ENCODE measurements at regions of chr13 and their contacts with region 1.

Region 1: DNA sequence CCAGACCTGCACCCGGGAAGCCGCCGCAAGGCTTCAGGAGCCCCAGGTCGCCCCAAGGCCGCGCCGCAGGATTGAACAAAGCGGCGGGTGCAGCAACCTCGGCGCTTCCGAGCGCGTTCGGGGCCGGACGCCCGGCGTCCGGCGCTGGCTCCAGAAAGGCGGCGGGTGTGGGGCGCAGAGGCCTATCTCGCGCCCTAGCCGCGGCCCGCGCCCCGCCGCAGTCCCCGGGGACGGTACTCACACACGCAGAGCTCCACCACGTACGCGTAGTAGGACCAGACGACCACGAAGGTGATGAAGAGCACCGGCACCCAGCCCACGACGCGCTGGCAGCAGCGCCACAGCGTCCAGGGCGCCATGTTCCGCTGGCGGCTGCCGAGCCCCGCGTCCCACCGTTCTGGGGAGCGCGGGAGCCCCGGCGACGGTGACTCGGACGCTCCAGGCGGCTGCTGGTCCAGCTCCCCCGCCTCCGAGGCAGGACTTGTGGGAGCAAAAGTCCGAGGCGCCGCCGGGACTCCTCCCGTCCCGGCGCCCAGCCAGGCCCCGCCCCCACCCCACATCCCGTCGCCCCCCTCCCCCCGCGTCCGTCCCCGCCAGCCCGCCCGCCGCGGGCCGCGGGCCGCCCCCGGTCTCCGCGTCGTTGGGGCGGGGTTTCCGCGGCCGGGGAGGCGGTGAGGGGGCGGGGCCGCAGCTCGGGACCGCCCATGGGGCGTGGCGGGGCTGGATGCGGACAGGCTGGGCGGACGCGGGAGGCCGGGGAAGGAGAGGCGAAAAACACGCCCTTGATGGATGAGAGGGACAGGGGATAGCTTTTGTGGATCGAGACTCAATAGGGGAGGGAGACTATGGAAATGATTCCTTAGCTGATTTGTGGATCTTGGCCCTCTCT is at the start of gene ZDHHC20:
- DNase-seq: peak; percentile 83
- ATAC-seq: peak; percentile 83
- H3K4me3 ChIP-seq: peak within 1 kb of the TSS; percentile 99
- H3K27ac ChIP-seq: peak within 1 kb of the TSS; percentile 52
- H3K4me1 ChIP-seq: peaks cover 11% of the 10 kb centered on the region; the same call in 1 of the 2 replicates
- H3K27me3 ChIP-seq: no peaks in the 10 kb centered on the region
- CTCF ChIP-seq: no peak
- total RNA-seq, gene ZDHHC20: 46.4 and 53.7 TPM in 2 replicates

Region 2: DNA sequence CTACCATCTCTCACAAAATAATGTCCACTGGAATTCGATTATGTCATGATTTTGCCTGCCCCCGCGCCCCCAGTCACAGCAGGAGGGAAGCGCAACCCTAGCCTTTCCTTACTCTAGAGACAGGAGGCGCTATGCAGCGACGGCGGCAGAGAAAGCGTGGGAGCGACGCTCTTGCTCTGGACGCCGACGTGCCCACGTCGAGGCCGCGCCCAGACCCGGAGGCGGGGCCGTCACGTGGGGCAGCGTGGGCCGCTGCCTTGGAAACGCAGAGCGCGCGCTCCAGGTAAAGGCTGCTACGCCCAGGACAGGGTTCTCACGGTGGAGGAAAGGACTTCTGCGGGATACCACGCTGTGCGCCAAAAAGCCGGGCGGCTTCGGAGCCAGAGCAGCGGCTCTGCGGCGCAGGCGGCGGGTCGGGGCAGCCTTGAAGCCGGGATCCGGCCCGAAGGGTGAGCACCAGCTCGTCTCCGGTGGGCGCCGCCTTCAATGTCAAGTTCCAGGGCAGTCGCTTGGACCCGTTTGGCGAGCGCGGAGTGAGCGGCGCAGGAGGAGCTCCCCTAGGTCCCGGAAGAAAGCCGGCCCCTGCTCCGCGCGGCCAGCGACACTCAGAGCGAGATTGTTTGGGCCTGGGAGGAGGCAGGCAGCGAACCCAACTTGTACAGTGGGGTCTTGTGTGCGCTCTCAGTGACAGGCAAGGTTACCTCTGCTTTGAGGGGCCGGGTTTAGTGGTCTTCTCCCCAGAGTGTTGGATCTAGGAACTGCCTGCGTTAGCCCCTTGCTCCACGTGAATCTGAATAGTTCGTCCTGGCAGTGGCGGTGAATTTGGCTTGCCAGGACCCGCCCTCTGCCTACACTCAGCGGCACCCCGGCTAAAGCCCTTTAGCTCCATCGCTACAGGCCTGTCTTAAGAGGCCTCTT is 160.9 kb before region 1 on chr13:
- CTCF ChIA-PET with region 1: no interaction called
- POLR2A ChIA-PET with region 1: interaction called, 10 read pairs
- intact Hi-C with region 1: loop called (anchors 5 kb)
- DNase-seq: peak; percentile 87
- ATAC-seq: peak; percentile 88
- H3K4me3 ChIP-seq: peak overlapping the region; percentile 86
- H3K27ac ChIP-seq: peak overlapping the region; percentile 44
- H3K4me1 ChIP-seq: peaks cover 14% of the 10 kb centered on the region
- H3K27me3 ChIP-seq: no peaks in the 10 kb centered on the region
- CTCF ChIP-seq: peak; percentile 64

Region 3: GRCh38 chr13:21402586-21403228 is 56.4 kb before region 1 on chr13:
- CTCF ChIA-PET with region 1: no interaction called
- POLR2A ChIA-PET with region 1: no interaction called
- intact Hi-C with region 1: loop called (anchors 5 kb)
- DNase-seq: peak; percentile 50
- ATAC-seq: peak; percentile 78
- H3K4me3 ChIP-seq: no peak overlapping the region
- H3K27ac ChIP-seq: peak overlapping the region; percentile 34
- H3K4me1 ChIP-seq: peaks cover 31% of the 10 kb centered on the region
- H3K27me3 ChIP-seq: no peaks in the 10 kb centered on the region
- CTCF ChIP-seq: no peak

Region 4: GRCh38 chr13:21420706-21421105 is 38.4 kb before region 1 on chr13:
- CTCF ChIA-PET with region 1: no interaction called
- POLR2A ChIA-PET with region 1: no interaction called
- intact Hi-C with region 1: loop called (anchors 2 kb)
- DNase-seq: peak; percentile 8
- ATAC-seq: peak; percentile 93
- H3K4me3 ChIP-seq: no peak overlapping the region
- H3K27ac ChIP-seq: 0 out of 2 replicates have a peak overlapping the region, but pooled peaks have one; percentile 1
- H3K4me1 ChIP-seq: peaks cover 5% of the 10 kb centered on the region; the same call in 1 of the 2 replicates
- H3K27me3 ChIP-seq: no peaks in the 10 kb centered on the region
- CTCF ChIP-seq: no peak

Region 5: DNA sequence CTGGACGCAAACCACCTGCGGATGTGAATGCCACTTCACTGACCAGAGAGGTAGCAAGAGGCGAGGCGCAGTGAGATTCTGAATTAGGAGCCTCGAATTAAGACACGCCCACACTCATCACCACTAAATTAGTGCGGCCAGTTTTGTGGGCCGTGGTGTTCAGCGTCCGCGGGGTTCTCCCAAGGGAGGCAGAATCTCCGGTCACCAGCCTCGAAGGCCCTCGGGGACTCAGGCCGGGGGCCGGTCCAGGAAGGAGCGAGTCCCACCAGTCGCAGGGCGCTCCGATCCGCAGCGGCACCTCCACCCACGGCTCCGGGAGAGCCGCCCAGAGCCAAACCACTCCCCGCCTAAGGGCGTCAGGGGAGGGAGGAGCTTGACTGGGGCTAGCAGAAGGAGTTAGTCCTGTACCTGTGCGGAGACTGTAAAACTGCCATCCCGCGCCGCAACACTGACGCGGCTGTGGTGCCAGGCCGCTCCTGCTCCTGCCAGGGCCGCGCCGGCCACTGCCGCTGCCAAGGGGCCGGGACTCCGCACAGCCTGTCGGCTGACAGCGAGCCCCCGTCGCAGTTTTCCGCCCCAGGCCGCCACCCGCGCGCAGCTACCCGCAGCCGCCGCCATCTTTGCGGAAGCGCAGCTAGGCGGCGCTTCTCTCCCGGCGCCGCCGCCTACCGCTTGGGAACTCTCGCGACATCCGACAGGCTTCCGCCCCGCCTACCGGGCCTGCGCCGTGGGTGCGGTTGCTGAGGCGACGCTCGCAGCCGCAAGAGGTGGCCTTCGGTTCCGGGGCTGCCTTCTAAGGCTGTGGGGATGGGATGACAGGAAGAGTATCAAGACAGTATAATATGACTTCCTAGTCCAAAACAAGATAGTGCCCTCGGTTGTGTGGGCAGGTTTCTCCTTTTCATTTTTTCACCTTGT is 144.7 kb after region 1 on chr13 and contains the start of gene MICU2:
- CTCF ChIA-PET with region 1: no interaction called
- POLR2A ChIA-PET with region 1: no interaction called
- intact Hi-C with region 1: no loop called
- DNase-seq: peak; percentile 87
- ATAC-seq: peak; percentile 98
- H3K4me3 ChIP-seq: peak within 1 kb of the TSS; percentile 87
- H3K27ac ChIP-seq: peak within 1 kb of the TSS; percentile 74
- H3K4me1 ChIP-seq: peaks cover 5% of the 10 kb centered on the region; the same call in 1 of the 2 replicates
- H3K27me3 ChIP-seq: peaks cover 8% of the 10 kb centered on the region; the same call in 1 of the 2 replicates
- CTCF ChIP-seq: no peak
- total RNA-seq, gene MICU2: 53.3 and 69.9 TPM in 2 replicates

Measured in PC-3 (cell line).